ENCODE measurements at regions of chr22 and their contacts with region 1.

Region 1: DNA sequence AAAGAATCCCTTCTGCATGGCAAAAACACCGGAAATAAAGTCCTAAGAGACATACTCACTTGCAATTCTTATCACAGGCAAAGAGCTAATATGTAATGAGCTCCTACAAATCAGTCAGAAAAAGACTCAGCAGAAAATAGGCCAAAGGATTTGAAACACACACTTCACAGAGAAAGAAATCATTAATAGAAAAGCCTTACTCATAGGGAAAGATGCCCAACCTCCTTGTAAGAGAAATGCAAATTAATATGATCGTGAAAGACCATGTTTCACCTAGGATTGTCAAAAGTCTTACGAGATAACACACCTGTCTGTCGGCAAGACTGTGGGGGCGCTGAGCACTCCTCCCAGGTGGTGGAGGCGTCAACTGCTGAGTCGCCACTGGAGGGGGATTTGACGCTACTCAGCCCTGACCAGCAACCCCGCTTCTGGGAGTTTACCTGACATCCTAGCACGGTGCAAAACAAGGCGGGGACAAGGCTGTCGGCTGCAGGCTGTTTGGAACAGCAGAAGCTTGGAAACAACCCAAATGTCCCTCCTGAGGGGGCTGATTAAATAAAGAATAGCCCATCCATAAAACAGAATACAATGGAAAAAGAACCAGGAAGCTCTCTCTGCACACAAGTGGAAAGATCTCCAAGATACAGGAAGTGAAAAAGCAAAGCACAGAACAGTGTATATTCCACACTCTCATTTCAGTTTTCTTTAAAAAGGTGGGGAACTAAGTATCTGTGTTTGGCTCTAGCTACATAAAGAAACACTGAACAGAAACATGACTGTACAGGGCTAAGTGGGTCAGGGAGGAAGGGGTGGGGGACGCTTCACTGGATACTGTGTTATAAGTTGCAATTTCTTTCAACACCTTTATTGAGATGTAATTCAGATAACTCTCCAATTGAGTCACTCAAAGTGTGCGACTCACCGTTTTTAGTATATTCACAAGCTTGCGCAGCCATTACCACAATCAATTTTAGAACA is 11.5 kb downstream of the CSNK1E start:
- DNase-seq: no peak
- H3K4me3 ChIP-seq: no peak overlapping the region
- H3K27ac ChIP-seq: no peak overlapping the region
- H3K4me1 ChIP-seq: peaks cover 2 to 18% (median 8%) of the 10 kb centered on the region in 4 experiments
- H3K27me3 ChIP-seq: no peaks in the 10 kb centered on the region
- CTCF ChIP-seq: peak; percentile 59 to 73 (median 65)
- EP300 ChIP-seq: no peak
- POLR2A ChIP-seq: no peak
- RAD21 ChIP-seq: peak; percentile 59 to 67

Region 2: DNA sequence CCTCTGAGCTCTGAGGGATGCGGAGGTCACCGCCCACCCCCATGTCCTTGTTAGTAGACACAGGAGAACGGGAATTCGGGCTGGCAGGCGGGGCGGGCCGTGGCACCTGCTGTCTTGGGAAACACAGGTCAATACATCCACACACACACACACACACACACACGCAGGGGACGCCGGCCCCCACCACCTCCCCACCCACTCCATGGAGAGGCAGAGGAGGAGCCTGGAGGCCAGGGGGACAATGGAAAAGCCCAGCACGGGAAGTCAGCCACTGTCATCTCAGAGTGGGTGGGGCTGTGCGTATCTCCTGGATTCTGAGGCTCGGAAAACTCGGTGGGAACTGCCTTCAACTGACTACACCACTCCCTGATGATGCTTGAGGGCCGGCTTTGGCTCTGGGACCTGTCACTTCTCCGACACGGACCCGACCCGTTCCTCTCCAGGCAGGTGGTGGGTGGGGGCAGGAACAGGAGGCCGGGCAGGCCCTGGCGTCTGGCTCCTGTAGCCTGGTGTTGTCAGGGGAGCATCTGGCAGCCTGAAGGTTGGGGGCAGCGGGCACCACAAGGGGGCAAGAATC is 14.5 kb before region 1 on chr22:
- CTCF ChIA-PET with region 1: interaction called, 18 read pairs
- POLR2A ChIA-PET with region 1: interaction called, 11 read pairs
- DNase-seq: no peak
- H3K4me3 ChIP-seq: no peak overlapping the region
- H3K27ac ChIP-seq: no peak overlapping the region
- H3K4me1 ChIP-seq: peaks cover 0 to 3% (median 2%) of the 10 kb centered on the region in 4 experiments; a peak in 5 of 7 replicates
- H3K27me3 ChIP-seq: no peaks in the 10 kb centered on the region
- CTCF ChIP-seq: peak in 1 of 3 experiments; percentile 17; a peak in 1 of 4 replicates
- EP300 ChIP-seq: no peak
- POLR2A ChIP-seq: no peak
- RAD21 ChIP-seq: 0 out of 4 replicates have a peak, but pooled peaks of 1 of the 2 experiments have one; percentile 1

Region 3: GRCh38 chr22:38327805-38328204 is 22.0 kb after region 1 on chr22:
- CTCF ChIA-PET with region 1: interaction called, 7 read pairs
- POLR2A ChIA-PET with region 1: interaction called, 77 read pairs
- DNase-seq: no peak
- H3K4me3 ChIP-seq: no peak overlapping the region
- H3K27ac ChIP-seq: peak overlapping the region; percentile 60
- H3K4me1 ChIP-seq: peaks cover 14 to 36% (median 29%) of the 10 kb centered on the region in 4 experiments
- H3K27me3 ChIP-seq: no peaks in the 10 kb centered on the region
- CTCF ChIP-seq: no peak
- EP300 ChIP-seq: no peak
- POLR2A ChIP-seq: no peak
- RAD21 ChIP-seq: no peak

Region 4: GRCh38 chr22:38347897-38348750 is 42.4 kb after region 1 on chr22:
- CTCF ChIA-PET with region 1: interaction called, 43 read pairs
- POLR2A ChIA-PET with region 1: interaction called, 9 read pairs
- DNase-seq: peak in 1 of 2 experiments; percentile 52
- H3K4me3 ChIP-seq: no peak overlapping the region
- H3K27ac ChIP-seq: no peak overlapping the region
- H3K4me1 ChIP-seq: peaks cover 0 to 25% (median 4%) of the 10 kb centered on the region in 4 experiments; a peak in 6 of 7 replicates
- H3K27me3 ChIP-seq: no peaks in the 10 kb centered on the region
- CTCF ChIP-seq: no peak
- EP300 ChIP-seq: no peak
- POLR2A ChIP-seq: no peak
- RAD21 ChIP-seq: no peak

Region 5: GRCh38 chr22:38353701-38354100 is 47.9 kb after region 1 on chr22:
- CTCF ChIA-PET with region 1: interaction called, 43 read pairs
- POLR2A ChIA-PET with region 1: interaction called, 9 read pairs
- DNase-seq: no peak
- H3K4me3 ChIP-seq: no peak overlapping the region
- H3K27ac ChIP-seq: no peak overlapping the region
- H3K4me1 ChIP-seq: peaks cover 0 to 22% (median 6%) of the 10 kb centered on the region in 4 experiments; a peak in 6 of 7 replicates
- H3K27me3 ChIP-seq: no peaks in the 10 kb centered on the region
- CTCF ChIP-seq: no peak
- EP300 ChIP-seq: no peak
- POLR2A ChIP-seq: no peak
- RAD21 ChIP-seq: no peak